K562 (cell line): ENCODE measurements at regions of chr5 and their contacts with region 1.

Region 1: GRCh38 chr5:127909078-127909477 is 174.5 kb upstream of the SLC12A2 start:
- DNase-seq: peak; percentile 8 to 48 (median 20)
- ATAC-seq: peak; percentile 97
- H3K4me3 ChIP-seq: no peak overlapping the region
- H3K27ac ChIP-seq: no peak overlapping the region
- H3K4me1 ChIP-seq: no peaks in the 10 kb centered on the region
- H3K27me3 ChIP-seq: peaks cover 0 to 4% of the 10 kb centered on the region in 2 experiments; a peak in 1 of 5 replicates
- CTCF ChIP-seq: peak; percentile 54 to 66 (median 56)
- EP300 ChIP-seq: no peak
- POLR2A ChIP-seq: no peak
- RAD21 ChIP-seq: peak; percentile 36 to 64

Region 2: DNA sequence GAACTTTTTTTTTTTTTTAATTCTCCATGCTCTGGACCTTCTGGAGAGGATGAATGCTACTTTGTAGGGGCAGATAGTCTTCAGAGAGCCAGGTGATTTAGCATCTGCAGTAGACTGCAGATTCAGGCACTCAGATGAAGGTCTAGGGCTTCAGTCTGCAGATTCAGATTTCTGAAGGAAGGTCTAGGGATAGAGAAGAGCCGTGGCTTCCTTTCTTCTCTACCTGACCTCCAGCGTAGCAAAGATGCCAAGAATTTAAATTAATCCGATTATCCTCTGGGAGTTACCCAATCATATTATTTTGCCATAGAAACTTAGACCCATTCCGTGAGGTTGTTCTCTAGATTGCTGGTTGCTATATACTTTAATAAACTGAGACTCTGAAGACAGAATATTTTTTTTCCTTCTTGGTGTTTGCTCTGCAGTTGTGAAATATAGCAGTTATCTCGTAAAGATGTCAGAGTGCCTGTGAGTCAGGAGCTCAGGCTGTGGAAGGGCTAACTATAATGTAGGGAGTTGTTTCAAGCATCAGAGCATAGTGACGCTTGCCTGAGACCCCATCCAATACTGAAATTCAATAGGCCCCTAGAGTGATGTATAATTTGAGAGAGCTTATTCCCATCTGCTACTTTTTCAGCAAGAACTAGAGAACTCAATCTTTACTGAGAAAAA is 41.8 kb after region 1 on chr5:
- CTCF ChIA-PET with region 1: no interaction called
- POLR2A ChIA-PET with region 1: no interaction called
- in situ Hi-C with region 1: no loop called
- intact Hi-C with region 1: no loop called
- DNase-seq: no peak
- ATAC-seq: no peak
- H3K4me3 ChIP-seq: no peak overlapping the region
- H3K27ac ChIP-seq: no peak overlapping the region
- H3K4me1 ChIP-seq: no peaks in the 10 kb centered on the region
- H3K27me3 ChIP-seq: no peaks in the 10 kb centered on the region
- CTCF ChIP-seq: no peak
- EP300 ChIP-seq: no peak
- POLR2A ChIP-seq: no peak
- RAD21 ChIP-seq: no peak

Region 3: DNA sequence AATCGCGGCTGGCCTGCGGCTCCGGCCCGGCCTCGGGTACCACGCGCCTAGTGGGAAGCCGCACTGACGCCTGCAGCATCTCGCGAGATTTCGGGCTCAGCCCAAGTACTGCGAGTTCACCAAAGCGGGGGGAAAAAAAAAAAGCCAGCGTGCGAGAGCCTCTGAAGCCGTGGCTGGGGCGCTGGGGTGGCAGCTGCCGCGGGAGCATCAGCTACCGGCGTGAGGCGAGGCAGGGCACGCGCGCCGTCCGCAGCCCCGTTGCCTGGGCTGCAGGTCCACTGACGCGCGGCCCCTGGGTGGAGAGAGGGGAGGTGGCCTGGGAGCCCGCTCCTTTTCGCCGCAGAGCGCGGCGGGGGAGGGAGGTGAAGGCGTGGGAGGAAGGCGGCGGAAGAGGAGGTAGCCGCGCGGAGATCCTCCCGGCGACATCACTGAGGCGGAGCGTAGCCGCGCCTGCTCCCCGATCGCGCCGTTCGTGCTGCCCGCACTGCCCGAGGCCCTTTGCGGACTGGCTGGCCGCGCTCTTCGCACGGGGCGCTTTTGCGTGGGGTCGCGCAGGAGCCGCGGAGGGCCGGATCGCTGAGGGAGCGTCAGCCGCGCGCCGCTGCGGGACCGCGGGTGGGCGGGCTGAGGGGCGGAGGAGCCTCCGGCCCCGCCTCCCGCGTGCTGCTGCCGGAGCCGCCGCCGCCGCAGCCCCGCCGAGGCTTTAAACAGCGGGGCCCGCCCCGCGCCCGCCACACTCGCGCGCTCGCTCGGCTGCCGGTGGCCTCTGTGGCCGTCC is 174.1 kb after region 1 on chr5 and contains the start of gene SLC12A2:
- CTCF ChIA-PET with region 1: no interaction called
- POLR2A ChIA-PET with region 1: no interaction called
- in situ Hi-C with region 1: no loop called
- intact Hi-C with region 1: loop called (anchors 5 kb)
- DNase-seq: peak; percentile 81 to 94 (median 85)
- ATAC-seq: peak; percentile 82
- H3K4me3 ChIP-seq: peak within 1 kb of the TSS; percentile 80
- H3K27ac ChIP-seq: peak within 1 kb of the TSS; percentile 89
- H3K4me1 ChIP-seq: peaks cover 17 to 20% of the 10 kb centered on the region in 2 experiments; a peak in 4 of 5 replicates
- H3K27me3 ChIP-seq: no peaks in the 10 kb centered on the region
- CTCF ChIP-seq: peak in 1 of 3 experiments; percentile 13; a peak in 1 of 6 replicates
- EP300 ChIP-seq: no peak
- POLR2A ChIP-seq: peak; percentile 84
- RAD21 ChIP-seq: no peak
- polyA plus RNA-seq, gene SLC12A2: 5.3 to 5.4 TPM